ENCODE measurements at regions of chr5 and their contacts with region 1.

Region 1: DNA sequence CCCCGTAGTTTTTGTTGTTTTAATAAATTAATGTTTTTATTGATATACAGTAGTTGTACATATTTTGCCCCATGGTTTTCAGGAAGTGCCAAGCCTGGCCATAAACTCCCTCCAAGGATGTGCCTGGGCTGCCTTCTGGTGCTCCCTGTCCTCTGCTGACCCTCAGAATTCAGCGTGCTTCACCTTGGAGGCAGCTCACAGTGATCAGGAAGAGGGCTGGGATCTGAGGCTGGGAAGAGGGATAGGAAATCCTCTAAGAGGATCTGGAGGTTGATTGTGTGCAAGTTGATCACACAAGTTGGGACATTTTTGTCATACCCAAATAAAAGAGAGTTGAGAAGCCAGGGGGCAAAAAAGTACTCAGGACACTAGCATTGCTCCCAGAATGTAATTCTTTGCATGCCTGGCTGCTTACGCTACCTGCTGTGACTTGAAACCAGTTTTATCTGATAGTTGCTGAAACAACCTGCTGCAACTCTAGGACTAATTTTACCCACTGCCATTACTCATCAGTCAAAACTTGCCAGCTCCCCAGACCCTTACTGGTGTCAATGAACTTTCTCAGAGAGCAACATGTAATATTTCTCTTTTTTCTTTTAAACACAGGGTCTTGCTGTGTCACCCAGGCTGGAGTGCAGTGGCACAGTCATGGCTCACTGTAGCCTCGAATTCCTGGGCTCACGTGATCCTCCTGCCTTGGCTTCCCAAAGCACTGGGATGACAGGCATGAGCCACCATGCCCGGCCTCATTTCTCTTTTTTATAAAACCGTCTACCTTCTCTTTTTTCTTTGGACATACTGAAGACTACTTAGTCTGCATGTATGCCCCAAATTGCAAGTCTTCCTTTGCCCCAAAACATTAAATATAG is 29.0 kb downstream of the PDE6A start:
- DNase-seq: peak; percentile 56
- ATAC-seq: no peak
- H3K4me3 ChIP-seq: no peak overlapping the region
- H3K27ac ChIP-seq: no peak overlapping the region
- H3K4me1 ChIP-seq: 0 out of 2 replicates have a peak, but pooled peaks cover 5% of the 10 kb centered on the region
- H3K27me3 ChIP-seq: no peaks in the 10 kb centered on the region
- CTCF ChIP-seq: no peak

Region 2: DNA sequence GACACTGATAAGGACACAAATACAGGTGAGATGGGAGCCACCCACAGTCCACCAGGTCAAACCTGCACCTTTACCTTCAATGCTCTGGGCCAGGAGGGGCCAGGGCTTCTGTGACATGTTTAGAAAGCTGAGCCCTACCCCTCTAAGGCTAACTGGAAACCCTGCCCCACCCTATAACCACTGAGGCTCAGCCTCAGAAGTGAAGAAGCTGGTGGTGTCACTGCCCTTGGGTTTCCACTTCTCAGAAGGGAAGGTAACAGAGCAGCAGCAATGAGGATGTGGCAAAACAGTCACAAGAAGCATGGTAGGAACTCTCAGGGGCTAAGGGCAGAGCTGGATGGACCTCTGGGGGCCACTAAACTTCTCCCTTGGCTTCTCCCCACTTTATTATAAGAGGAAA is 234.0 kb after region 1 on chr5:
- CTCF ChIA-PET with region 1: interaction called, 11 read pairs
- POLR2A ChIA-PET with region 1: no interaction called
- intact Hi-C with region 1: no loop called
- DNase-seq: no peak
- ATAC-seq: no peak
- H3K4me3 ChIP-seq: no peak overlapping the region
- H3K27ac ChIP-seq: no peak overlapping the region
- H3K4me1 ChIP-seq: no peaks in the 10 kb centered on the region
- H3K27me3 ChIP-seq: no peaks in the 10 kb centered on the region
- CTCF ChIP-seq: no peak